ENCODE measurements at regions of chr3 and their contacts with region 1.

Region 1: GRCh38 chr3:159988617-159989271 is at the start of gene IL12A:
- DNase-seq: peak; percentile 59
- ATAC-seq: peak; percentile 98
- H3K4me3 ChIP-seq: peak within 1 kb of the TSS; percentile 63 to 71 (median 68)
- H3K27ac ChIP-seq: no peak within 1 kb of the TSS
- H3K4me1 ChIP-seq: peaks cover 20% of the 10 kb centered on the region
- H3K27me3 ChIP-seq: no peaks in the 10 kb centered on the region
- CTCF ChIP-seq: peak; percentile 95
- EP300 ChIP-seq: no peak
- POLR2A ChIP-seq: 0 out of 4 replicates have a peak, but pooled peaks of 1 of the 2 experiments have one; percentile 24
- RAD21 ChIP-seq: peak; percentile 69
- total RNA-seq, gene IL12A: 0.74 and 1.1 TPM in 2 replicates

Region 2: GRCh38 chr3:159929435-159930141 is 59.2 kb before region 1 on chr3:
- CTCF ChIA-PET with region 1: no interaction called
- POLR2A ChIA-PET with region 1: interaction called, 6 read pairs
- in situ Hi-C with region 1: no loop called
- intact Hi-C with region 1: loop called (anchors 5 kb)
- DNase-seq: peak; percentile 80
- ATAC-seq: peak; percentile 97
- H3K4me3 ChIP-seq: peak overlapping the region; percentile 28 to 51 (median 48); a peak in 5 of 6 replicates
- H3K27ac ChIP-seq: peak overlapping the region; percentile 10
- H3K4me1 ChIP-seq: peaks cover 18% of the 10 kb centered on the region
- H3K27me3 ChIP-seq: no peaks in the 10 kb centered on the region
- CTCF ChIP-seq: peak; percentile 80
- EP300 ChIP-seq: no peak
- POLR2A ChIP-seq: no peak
- RAD21 ChIP-seq: peak; percentile 78; the same call in 1 of the 2 replicates

Region 3: DNA sequence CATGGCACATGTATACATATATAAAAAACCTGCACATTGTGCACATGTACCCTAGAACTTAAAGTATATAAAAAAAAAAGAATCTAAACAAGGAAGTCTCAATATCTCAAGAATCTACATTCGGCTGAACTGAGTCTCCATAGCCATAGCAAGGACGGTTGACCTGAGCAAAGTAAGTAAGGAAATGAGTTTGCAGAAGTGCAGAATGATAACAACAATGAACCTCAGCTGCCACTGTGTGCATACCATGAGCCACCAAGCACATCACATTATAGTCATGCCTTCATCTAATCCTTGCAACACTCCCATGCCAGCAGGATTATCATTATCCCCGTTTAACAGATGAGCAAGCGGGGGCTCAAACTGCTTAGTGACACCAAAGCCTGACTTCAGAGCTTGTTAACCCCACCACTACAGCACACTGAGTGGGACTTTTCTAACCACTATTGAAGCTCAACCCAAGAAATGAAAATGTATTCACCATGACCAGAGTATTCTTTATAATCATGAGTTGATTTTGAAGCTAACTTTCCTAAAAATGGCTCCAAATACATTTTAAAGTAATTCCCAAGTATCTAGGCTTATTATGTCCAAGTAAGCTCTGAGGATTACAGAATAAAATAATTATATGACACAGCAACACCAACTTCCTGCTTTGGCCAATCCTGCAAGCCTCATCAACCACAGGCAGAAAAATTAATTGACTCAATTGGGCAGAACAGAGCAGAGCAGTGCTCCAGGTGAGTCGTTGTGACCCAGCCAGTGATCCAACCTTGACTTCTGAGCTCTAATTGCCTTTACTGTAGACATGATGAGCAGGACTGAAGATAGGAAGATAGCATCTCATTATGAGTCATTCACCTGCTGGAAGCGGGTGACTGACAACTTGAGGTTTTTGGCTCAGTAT is 47.5 kb before region 1 on chr3:
- CTCF ChIA-PET with region 1: no interaction called
- POLR2A ChIA-PET with region 1: no interaction called
- in situ Hi-C with region 1: no loop called
- intact Hi-C with region 1: no loop called
- DNase-seq: no peak
- ATAC-seq: no peak
- H3K4me3 ChIP-seq: no peak overlapping the region
- H3K27ac ChIP-seq: no peak overlapping the region
- H3K4me1 ChIP-seq: no peaks in the 10 kb centered on the region
- H3K27me3 ChIP-seq: no peaks in the 10 kb centered on the region
- CTCF ChIP-seq: no peak
- EP300 ChIP-seq: no peak
- POLR2A ChIP-seq: no peak
- RAD21 ChIP-seq: no peak

Region 4: DNA sequence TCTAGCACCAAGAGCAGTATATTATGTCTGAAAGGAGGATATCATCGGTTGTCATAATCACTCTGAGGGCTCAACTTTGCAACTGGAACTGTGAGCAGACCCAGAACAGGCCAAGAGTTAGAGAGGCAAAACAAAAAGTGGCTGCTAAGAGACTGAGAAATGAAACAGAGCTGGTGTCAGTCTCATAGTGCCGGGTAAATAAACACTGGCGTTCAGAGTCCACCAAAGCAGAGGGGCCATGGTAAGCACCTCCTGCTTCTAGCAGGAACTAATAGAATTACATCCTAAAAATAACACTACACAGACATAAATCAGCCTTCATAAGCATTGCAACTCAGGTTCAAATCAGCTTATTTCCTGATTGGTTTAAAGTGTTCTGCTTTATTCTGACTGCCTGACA is 10.4 kb before region 1 on chr3:
- CTCF ChIA-PET with region 1: no interaction called
- POLR2A ChIA-PET with region 1: interaction called, 24 read pairs
- in situ Hi-C with region 1: no loop called
- intact Hi-C with region 1: no loop called
- DNase-seq: peak; percentile 80
- ATAC-seq: peak; percentile 99
- H3K4me3 ChIP-seq: peak overlapping the region in 2 of 3 experiments; percentile 1 to 32; a peak in 1 of 6 replicates
- H3K27ac ChIP-seq: peak overlapping the region; percentile 74
- H3K4me1 ChIP-seq: peaks cover 38% of the 10 kb centered on the region
- H3K27me3 ChIP-seq: no peaks in the 10 kb centered on the region
- CTCF ChIP-seq: no peak
- EP300 ChIP-seq: peak in 1 of 2 experiments; percentile 61; a peak in 1 of 4 replicates
- POLR2A ChIP-seq: no peak; a peak in 1 of 4 replicates
- RAD21 ChIP-seq: no peak